Activated CD4-positive, alpha-beta memory T cell treated with anti-CD3 and anti-CD28 coated beads for 36 hours (primary cell): ENCODE measurements at regions of chr1 and their contacts with region 1.

Region 1: GRCh38 chr1:182029379-182030331 is 31.9 kb downstream of the ZNF648 start:
- DNase-seq: peak; percentile 99
- H3K4me3 Mint-ChIP-seq: peak overlapping the region; percentile 88
- H3K27ac Mint-ChIP-seq: peak overlapping the region; percentile 92
- H3K4me1 Mint-ChIP-seq: peaks cover 13% of the 10 kb centered on the region
- H3K27me3 Mint-ChIP-seq: no peaks in the 10 kb centered on the region

Region 2: DNA sequence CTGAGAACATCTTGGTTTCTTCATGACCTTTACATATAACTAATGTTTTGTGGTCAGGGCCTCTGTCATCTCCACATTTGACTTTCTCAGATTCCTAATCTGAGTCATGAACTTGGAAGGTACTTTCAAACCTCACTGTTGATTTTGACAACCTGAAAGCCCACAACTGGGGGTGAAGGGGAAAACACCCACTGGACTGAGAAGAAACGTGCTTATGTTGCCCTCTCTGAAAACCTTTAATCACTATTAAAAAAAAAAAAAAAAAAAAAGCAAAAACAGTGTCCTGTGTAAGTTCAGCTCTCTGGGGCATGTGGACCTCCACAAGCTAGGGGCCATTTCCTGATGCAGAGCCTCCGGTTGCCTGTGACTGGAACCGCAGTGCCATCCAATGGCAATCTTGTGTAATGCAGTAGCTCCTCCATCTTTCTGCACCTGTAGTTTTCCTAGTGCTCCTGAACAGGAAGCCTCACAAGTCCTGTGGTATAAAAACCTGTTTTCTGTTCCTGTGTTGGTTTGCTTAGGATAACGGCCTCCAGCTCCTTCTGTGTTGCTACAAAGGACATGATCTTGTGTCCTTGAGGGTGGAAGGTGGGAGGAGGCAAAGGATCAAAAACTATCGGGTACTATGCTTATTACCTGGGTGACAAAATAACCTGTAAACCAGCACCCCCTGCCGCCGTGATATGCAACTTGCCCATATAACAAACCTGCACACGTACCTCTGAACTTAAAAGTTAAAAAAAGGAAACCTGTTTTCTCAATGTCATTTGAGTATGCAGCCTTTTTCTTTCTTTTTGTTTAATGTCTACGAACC is 92.7 kb before region 1 on chr1:
- CTCF ChIA-PET with region 1: no interaction called
- POLR2A ChIA-PET with region 1: no interaction called
- intact Hi-C with region 1: loop called (anchors 2 kb)
- DNase-seq: peak; percentile 68
- H3K4me3 Mint-ChIP-seq: no peak overlapping the region
- H3K27ac Mint-ChIP-seq: no peak overlapping the region
- H3K4me1 Mint-ChIP-seq: peaks cover 4% of the 10 kb centered on the region
- H3K27me3 Mint-ChIP-seq: no peaks in the 10 kb centered on the region

Region 3: DNA sequence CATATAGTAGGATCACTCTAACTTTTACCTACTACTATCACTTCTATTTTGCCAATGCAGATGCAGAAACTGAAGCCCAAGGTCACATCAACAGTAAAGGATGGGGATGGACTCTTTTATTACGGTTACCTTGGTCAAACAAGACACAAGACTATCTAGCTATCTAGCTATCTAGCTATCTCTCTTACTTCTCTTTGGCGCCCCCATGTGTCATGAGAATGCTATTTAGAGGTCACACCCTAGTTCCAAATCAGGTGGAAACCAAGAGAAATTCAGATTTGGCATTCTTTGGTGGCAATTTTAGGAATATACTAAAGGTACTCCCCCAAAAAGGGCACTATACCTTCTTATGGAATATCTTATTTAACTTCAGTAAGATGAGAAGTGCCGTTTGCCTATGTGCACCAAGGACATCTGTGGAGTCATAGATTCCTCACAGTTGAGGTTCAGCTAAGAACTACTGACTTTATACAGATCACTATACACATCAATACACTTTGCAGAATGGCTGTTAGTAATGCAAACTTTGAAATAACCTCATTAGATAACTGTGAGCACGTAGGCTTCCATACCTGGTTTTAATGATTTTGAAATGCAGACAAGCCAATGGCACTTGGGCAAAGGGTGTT is 25.2 kb after region 1 on chr1:
- CTCF ChIA-PET with region 1: interaction called, 13 read pairs
- POLR2A ChIA-PET with region 1: no interaction called
- intact Hi-C with region 1: loop called (anchors 2 kb)
- DNase-seq: peak; percentile 50
- H3K4me3 Mint-ChIP-seq: no peak overlapping the region
- H3K27ac Mint-ChIP-seq: no peak overlapping the region
- H3K4me1 Mint-ChIP-seq: peaks cover 3% of the 10 kb centered on the region
- H3K27me3 Mint-ChIP-seq: peaks cover 19% of the 10 kb centered on the region

Region 4: GRCh38 chr1:182391362-182392044 is 361.8 kb after region 1 on chr1 and contains the start of gene GLUL:
- CTCF ChIA-PET with region 1: no interaction called
- POLR2A ChIA-PET with region 1: no interaction called
- intact Hi-C with region 1: loop called (anchors 2 kb)
- DNase-seq: peak; percentile 82
- H3K4me3 Mint-ChIP-seq: peak within 1 kb of the TSS; percentile 93
- H3K27ac Mint-ChIP-seq: peak within 1 kb of the TSS; percentile 80
- H3K4me1 Mint-ChIP-seq: peaks cover 22% of the 10 kb centered on the region
- H3K27me3 Mint-ChIP-seq: peaks cover 7% of the 10 kb centered on the region
- total RNA-seq, gene GLUL: 61.3 to 63.9 TPM

Region 5: DNA sequence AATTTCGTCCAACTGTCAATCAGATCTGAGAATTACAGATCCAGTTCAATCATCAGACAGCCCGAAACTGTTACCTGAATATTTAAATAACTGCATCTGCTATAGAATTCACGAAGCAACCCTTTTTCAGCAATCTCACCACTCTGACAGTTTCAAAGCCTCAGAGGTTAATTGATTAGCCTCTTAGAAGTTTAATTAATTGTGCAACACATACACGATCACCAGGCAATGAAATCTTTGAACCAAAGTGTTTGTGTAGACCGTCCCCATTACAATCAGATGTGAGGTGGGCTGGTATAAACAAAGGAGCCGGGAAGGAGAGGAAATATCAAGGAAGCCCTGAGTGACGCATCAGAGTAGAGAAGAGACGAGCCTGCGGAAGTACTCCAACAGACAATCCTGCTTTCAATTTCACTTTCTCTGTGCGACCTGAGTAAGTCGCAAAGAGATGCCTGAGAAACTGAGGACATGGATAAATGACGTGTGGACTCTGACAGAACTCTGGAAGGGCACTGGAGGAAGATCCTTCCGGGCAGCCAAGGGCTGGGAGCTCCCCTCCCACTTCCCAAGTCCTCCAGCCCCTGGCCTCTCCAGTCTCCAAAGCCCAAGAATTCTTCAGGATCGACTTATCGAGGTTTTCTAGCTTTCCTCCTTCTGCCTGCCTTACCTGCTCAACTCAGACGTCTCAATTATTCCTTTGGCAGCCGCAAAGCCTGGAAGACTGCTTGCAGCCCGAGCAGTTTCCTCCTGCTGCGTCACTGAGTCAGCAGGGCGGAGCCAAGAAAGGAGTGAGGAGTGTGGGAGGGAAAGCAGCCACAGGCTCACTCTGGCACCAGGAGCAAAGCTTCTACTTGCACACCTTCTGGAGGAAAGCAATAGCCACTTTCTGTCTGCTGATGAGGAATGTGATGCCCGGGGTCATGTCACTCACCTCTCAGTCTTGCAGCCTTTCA is 559.1 kb after region 1 on chr1 and contains the start of gene RNASEL:
- CTCF ChIA-PET with region 1: no interaction called
- POLR2A ChIA-PET with region 1: no interaction called
- intact Hi-C with region 1: loop called (anchors 5 kb)
- DNase-seq: peak; percentile 74
- H3K4me3 Mint-ChIP-seq: peak within 1 kb of the TSS; percentile 94
- H3K27ac Mint-ChIP-seq: peak within 1 kb of the TSS; percentile 99
- H3K4me1 Mint-ChIP-seq: peaks cover 46% of the 10 kb centered on the region
- H3K27me3 Mint-ChIP-seq: no peaks in the 10 kb centered on the region
- total RNA-seq, gene RNASEL: 4.5 TPM

Region 6: GRCh38 chr1:182839209-182840065 is 809.8 kb after region 1 on chr1 and contains the start of gene DHX9:
- CTCF ChIA-PET with region 1: no interaction called
- POLR2A ChIA-PET with region 1: no interaction called
- intact Hi-C with region 1: loop called (anchors 1 kb)
- DNase-seq: peak; percentile 96
- H3K4me3 Mint-ChIP-seq: peak within 1 kb of the TSS; percentile 98
- H3K27ac Mint-ChIP-seq: peak within 1 kb of the TSS; percentile 97
- H3K4me1 Mint-ChIP-seq: peaks cover 38% of the 10 kb centered on the region
- H3K27me3 Mint-ChIP-seq: no peaks in the 10 kb centered on the region
- total RNA-seq, gene DHX9: 212 to 215 TPM